Heart left ventricle (tissue), 16 donors: ENCODE measurements at regions of chr5 and their contacts with region 1.

Region 1: DNA sequence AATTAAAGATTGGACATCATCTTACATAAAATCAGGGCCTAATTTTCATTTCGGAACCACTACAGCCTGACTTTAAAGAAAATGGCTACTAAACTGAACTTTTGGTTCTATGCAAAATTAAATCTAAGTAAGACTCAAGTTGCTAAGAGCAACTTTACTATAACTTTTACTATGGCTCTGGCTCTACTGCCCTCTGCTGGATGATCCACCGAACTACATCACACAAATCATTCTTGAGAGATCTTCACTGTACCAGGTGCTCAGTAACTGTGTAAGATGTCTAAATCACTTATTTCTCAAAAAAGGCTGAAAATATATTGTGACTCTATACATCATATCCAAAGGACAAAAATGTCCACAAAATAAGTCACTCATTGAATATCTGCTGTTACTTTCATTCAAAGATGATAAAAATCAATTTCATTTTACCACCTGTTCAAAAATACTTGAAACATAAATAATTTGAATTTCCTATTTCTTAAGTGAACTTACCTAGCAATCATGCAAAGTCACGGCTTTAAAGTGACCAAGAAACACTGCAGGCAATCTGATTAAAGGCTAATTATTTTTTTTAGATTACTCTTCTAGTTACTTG is 13.5 kb downstream of the MOCS2 start:
- DNase-seq: peak in 4 of 5 donors; percentile 28 to 49 (median 39)
- ATAC-seq: peak; percentile 51 to 81 (median 76)
- H3K4me3 ChIP-seq: no peak overlapping the region
- H3K27ac ChIP-seq: no peak overlapping the region
- H3K4me1 ChIP-seq: peaks cover 0 to 8% (median 2%) of the 10 kb centered on the region in 12 donors
- H3K27me3 ChIP-seq: no peaks in the 10 kb centered on the region
- CTCF ChIP-seq: peak; percentile 82 to 97 (median 88)
- POLR2A ChIP-seq: no peak

Region 2: DNA sequence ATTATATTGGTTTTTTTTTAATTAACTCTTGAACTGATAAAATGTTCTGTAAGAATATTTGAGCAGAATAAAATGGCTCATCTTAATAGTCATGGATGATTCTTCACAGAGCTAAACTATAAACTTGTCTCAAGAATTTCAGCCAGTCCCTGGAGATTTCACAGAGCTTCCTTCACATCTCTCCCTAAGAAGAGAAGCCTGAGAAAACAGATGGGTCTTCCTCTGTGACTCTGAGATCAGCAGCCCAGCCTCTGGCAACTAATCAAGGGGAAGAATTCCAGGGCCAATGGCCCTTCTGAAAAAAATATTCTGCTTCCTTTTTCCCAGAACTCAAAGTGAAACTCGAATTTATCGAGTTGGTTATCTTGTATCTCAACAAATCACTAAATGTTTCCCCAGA is 430.5 kb before region 1 on chr5:
- intact Hi-C with region 1: loop called in 2 of 10 experiments (anchors 10 kb)
- DNase-seq: peak in 4 of 5 donors; percentile 30 to 62 (median 48)
- ATAC-seq: peak in 3 of 4 donors; percentile 52 to 83 (median 76)
- H3K4me3 ChIP-seq: peak overlapping the region in 3 of 12 donors; percentile 9 to 26 (median 25)
- H3K27ac ChIP-seq: peak overlapping the region in 10 of 12 donors; percentile 15 to 59 (median 41)
- H3K4me1 ChIP-seq: peaks cover 0 to 22% (median 6%) of the 10 kb centered on the region in 12 donors
- H3K27me3 ChIP-seq: no peaks in the 10 kb centered on the region
- CTCF ChIP-seq: no peak
- POLR2A ChIP-seq: no peak

Region 3: GRCh38 chr5:52787600-52788504 is 308.2 kb before region 1 on chr5 and contains the starts of genes ITGA1 and PELO:
- intact Hi-C with region 1: loop called in 1 of 10 experiments (anchors 10 kb)
- DNase-seq: peak; percentile 75 to 86 (median 79)
- ATAC-seq: peak; percentile 88 to 95 (median 92)
- H3K4me3 ChIP-seq: peak within 1 kb of the TSS; percentile 45 to 83 (median 72)
- H3K27ac ChIP-seq: peak within 1 kb of the TSS; percentile 82 to 96 (median 90)
- H3K4me1 ChIP-seq: peaks cover 0 to 42% (median 14%) of the 10 kb centered on the region in 12 donors
- H3K27me3 ChIP-seq: no peaks in the 10 kb centered on the region
- CTCF ChIP-seq: peak; percentile 16 to 71 (median 54)
- POLR2A ChIP-seq: peak in 1 of 2 donors; percentile 55
- total RNA-seq, gene ITGA1: 20.9 to 52.0 (median 24.6) TPM
- total RNA-seq, gene PELO: 12.8 to 28.4 (median 20.1) TPM

Region 4: DNA sequence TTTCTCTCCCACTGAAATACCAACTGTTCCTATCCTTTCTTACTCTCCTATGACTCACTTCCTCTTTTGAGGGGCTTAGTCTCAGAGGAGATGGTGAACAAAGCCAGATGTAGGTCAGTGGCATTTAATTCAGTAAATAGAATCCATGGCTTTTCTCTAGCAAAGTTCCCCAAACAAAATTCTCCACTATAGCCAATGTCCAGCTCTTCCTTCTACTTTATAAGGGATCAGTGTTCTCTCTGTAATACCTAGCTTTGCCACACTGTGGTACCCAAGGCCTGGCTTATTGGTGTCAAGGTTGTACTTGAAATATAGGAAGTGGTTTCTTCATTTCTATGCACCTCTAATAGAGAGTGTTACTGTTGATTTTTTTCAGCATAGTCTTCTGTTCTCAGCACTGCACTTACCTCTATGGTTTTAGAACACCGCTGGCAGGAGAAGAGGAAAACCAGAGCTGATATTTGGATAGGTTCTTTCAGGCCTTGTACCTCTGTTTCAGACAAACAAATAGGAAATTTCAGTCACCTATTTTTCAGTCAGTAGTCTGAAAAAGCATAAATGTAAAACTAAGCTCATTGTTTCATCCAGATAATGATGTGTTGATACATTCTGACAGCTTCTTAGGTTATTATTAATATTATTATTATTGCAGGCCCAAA is 147.5 kb before region 1 on chr5:
- intact Hi-C with region 1: loop called (anchors 1 to 2 kb)
- DNase-seq: peak in 4 of 5 donors; percentile 27 to 47 (median 36)
- ATAC-seq: peak; percentile 67 to 96 (median 90)
- H3K4me3 ChIP-seq: no peak overlapping the region
- H3K27ac ChIP-seq: peak overlapping the region in 3 of 12 donors; percentile 19 to 60 (median 38)
- H3K4me1 ChIP-seq: peaks cover 0 to 29% (median 6%) of the 10 kb centered on the region in 12 donors
- H3K27me3 ChIP-seq: no peaks in the 10 kb centered on the region
- CTCF ChIP-seq: peak; percentile 59 to 79 (median 76)
- POLR2A ChIP-seq: no peak

Region 5: DNA sequence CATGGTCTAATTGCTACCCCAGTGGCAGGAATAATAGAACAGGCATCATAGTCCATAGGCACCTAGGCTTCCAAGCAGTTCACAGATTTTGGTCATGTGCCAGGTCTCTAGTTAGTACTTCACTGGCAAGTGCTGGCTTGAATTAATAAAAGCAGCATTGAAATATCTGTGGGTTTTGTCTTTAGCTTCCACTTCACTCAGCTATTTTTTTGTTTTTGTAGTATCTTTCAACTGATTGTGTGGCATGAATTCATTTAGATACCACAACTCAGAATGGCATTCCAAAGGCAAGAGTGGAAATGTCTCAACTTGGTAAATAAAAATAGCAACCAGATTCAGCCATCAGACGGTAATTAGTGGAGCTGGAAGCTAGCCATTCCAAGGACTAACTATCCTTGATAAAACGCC is 134.8 kb before region 1 on chr5:
- intact Hi-C with region 1: loop called in 1 of 10 experiments (anchors 5 kb)
- DNase-seq: peak in 1 of 5 donors; percentile 18
- ATAC-seq: peak in 3 of 4 donors; percentile 44 to 67 (median 49)
- H3K4me3 ChIP-seq: no peak overlapping the region
- H3K27ac ChIP-seq: no peak overlapping the region
- H3K4me1 ChIP-seq: peaks cover 0 to 9% (median 0%) of the 10 kb centered on the region in 12 donors
- H3K27me3 ChIP-seq: no peaks in the 10 kb centered on the region
- CTCF ChIP-seq: no peak
- POLR2A ChIP-seq: no peak

Region 6: DNA sequence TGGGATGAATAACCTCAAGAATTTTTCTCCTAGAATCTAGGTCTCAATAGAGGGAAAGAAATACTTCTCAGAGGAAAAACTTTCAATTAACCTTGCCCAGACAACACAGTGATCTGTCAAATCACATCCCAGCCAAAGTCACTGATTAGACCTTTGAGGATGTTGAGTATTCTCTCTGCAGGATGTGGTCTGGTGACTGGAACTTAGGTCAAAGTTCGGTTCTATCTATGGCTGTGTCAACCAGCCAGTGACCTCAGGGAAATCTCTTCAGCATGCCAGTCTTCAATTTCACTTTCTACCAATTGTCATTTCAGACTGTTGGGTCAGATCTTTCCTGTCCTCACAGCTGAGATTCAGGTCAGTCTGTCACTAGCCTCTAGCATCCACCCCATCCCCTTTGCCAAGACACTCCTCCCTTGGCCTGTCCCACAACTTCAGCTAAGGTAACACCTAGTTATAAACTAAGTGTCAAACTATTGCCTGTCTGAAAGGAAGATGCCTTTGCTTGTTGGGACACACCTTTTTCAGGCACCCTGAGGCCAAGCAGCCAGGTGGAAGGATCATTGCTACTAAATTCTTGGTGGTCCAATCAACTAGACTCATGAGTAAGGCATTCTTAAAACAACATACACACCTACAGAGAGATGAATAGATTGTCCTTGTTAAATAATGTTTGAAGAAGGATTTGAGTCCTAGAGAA is 228.1 kb after region 1 on chr5:
- intact Hi-C with region 1: no loop called
- DNase-seq: no peak
- ATAC-seq: no peak
- H3K4me3 ChIP-seq: no peak overlapping the region
- H3K27ac ChIP-seq: no peak overlapping the region
- H3K4me1 ChIP-seq: peaks cover 0 to 5% (median 0%) of the 10 kb centered on the region in 12 donors
- H3K27me3 ChIP-seq: no peaks in the 10 kb centered on the region
- CTCF ChIP-seq: no peak
- POLR2A ChIP-seq: no peak